GM23248 (cell line): ENCODE measurements at regions of chr3 and their contacts with region 1.

Region 1: GRCh38 chr3:15409239-15410168 is 17.8 kb downstream of the METTL6 start:
- DNase-seq: no peak
- H3K4me3 ChIP-seq: no peak overlapping the region
- H3K27ac ChIP-seq: no peak overlapping the region
- H3K4me1 ChIP-seq: no peaks in the 10 kb centered on the region
- H3K27me3 ChIP-seq: no peaks in the 10 kb centered on the region

Region 2: DNA sequence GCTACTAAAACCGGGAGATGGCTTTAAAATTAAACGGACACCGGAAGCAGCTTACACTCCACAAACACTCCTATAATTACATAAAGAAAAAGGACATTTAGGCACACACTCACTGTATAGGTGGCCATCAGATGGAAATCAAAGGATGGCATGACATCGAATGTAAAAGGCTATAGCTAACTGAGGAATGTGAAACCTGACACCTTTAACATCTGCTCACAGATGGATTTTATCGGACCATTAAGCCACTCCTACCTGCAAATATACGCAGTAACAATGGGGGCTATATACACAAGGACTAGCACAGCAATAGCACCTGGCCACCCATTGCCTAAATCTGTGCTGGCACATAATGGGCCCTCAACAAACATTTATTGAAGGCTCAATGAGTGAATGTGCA is 296.0 kb before region 1 on chr3:
- in situ Hi-C with region 1: loop called (anchors 10 kb)
- DNase-seq: no peak
- H3K4me3 ChIP-seq: no peak overlapping the region
- H3K27ac ChIP-seq: no peak overlapping the region
- H3K4me1 ChIP-seq: no peaks in the 10 kb centered on the region
- H3K27me3 ChIP-seq: no peaks in the 10 kb centered on the region; the same call in 1 of the 2 replicates

Region 3: GRCh38 chr3:15268033-15268631 is 141.4 kb before region 1 on chr3:
- in situ Hi-C with region 1: no loop called
- DNase-seq: peak; percentile 94
- H3K4me3 ChIP-seq: no peak overlapping the region
- H3K27ac ChIP-seq: peak overlapping the region; percentile 92
- H3K4me1 ChIP-seq: peaks cover 24% of the 10 kb centered on the region
- H3K27me3 ChIP-seq: no peaks in the 10 kb centered on the region

Region 4: GRCh38 chr3:15636003-15636709 is 226.7 kb after region 1 on chr3:
- in situ Hi-C with region 1: no loop called
- DNase-seq: peak; percentile 97
- H3K4me3 ChIP-seq: peak overlapping the region; percentile 62
- H3K27ac ChIP-seq: peak overlapping the region; percentile 99
- H3K4me1 ChIP-seq: peaks cover 63% of the 10 kb centered on the region
- H3K27me3 ChIP-seq: no peaks in the 10 kb centered on the region